ENCODE measurements at regions of chr10 and their contacts with region 1.

Region 1: GRCh38 chr10:56928711-56929110 is 567.7 kb upstream of the ZWINT start:
- DNase-seq: no peak
- ATAC-seq: no peak
- H3K4me3 ChIP-seq: no peak overlapping the region
- H3K27ac ChIP-seq: no peak overlapping the region
- H3K4me1 ChIP-seq: no peaks in the 10 kb centered on the region
- H3K27me3 ChIP-seq: no peaks in the 10 kb centered on the region
- CTCF ChIP-seq: no peak

Region 2: DNA sequence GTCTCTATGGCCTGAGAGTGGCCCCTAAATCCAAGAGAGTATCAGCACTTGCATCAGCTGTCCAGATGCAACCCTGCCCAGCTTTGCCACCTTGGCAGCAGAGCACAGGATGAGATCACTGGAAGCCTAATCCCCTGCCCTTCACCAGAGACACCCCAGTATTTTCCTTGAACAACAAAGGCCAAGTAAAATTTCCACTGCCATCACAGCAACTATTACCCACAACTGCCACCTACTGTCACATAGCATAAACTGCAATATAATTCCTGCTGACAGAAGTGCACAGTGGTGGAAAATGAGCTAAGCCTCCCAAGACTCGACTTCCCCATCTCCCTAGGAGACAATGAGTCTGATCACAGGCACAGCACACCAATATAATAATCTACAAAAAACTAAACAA is 104.9 kb before region 1 on chr10:
- CTCF ChIA-PET with region 1: no interaction called
- POLR2A ChIA-PET with region 1: no interaction called
- in situ Hi-C with region 1: no loop called
- intact Hi-C with region 1: no loop called
- DNase-seq: peak; percentile 0
- ATAC-seq: no peak
- H3K4me3 ChIP-seq: no peak overlapping the region
- H3K27ac ChIP-seq: no peak overlapping the region
- H3K4me1 ChIP-seq: no peaks in the 10 kb centered on the region
- H3K27me3 ChIP-seq: no peaks in the 10 kb centered on the region
- CTCF ChIP-seq: peak; percentile 43; the same call in 1 of the 2 replicates

Region 3: DNA sequence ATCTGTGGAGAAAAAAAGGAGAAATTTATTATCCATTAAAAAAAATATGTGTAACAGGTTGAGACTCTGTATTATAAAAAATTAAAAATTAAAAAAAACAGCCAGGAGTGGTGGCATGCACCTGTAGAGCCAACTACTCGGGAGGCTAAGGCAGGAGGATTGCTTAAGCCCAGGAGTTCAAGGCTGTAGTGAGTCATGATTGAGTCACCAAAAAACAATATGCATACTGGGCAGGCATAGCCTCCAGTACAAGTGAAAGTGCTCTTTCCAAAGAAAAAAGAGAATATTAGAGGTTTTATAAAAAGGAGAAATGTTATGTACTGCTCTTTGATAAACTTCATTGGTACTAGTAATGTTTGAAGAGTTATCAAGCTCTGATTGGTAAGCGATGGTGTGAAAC is 79.5 kb after region 1 on chr10:
- CTCF ChIA-PET with region 1: no interaction called
- POLR2A ChIA-PET with region 1: no interaction called
- in situ Hi-C with region 1: no loop called
- intact Hi-C with region 1: no loop called
- DNase-seq: no peak
- ATAC-seq: no peak
- H3K4me3 ChIP-seq: no peak overlapping the region
- H3K27ac ChIP-seq: no peak overlapping the region
- H3K4me1 ChIP-seq: no peaks in the 10 kb centered on the region
- H3K27me3 ChIP-seq: no peaks in the 10 kb centered on the region
- CTCF ChIP-seq: no peak

Region 4: DNA sequence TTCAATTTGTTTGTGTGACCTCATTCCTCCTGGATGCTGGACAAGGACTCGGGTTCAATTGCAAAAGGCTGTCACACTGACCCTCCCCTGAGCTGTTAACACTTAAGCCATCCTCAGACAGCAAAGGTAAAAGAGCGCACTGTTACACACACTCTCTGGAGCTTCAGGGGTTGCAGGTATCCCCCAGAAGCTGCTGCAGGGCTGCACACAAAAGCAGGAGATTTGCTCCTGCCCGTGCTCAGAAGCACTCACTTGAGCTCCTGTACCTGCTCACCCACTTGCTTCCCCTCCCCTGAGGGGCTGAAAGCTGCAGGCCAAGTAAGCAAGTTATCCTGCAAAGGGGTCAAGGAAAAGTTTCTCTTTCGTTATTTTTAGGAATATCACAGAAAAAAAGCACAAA is 318.6 kb after region 1 on chr10:
- CTCF ChIA-PET with region 1: no interaction called
- POLR2A ChIA-PET with region 1: interaction called, 11 read pairs
- in situ Hi-C with region 1: no loop called
- intact Hi-C with region 1: no loop called
- DNase-seq: no peak
- ATAC-seq: no peak
- H3K4me3 ChIP-seq: no peak overlapping the region
- H3K27ac ChIP-seq: no peak overlapping the region
- H3K4me1 ChIP-seq: no peaks in the 10 kb centered on the region
- H3K27me3 ChIP-seq: no peaks in the 10 kb centered on the region
- CTCF ChIP-seq: no peak

Measured in Panc1 (cell line).